SK-N-SH (cell line): ENCODE measurements at regions of chr1 and their contacts with region 1.

Region 1: DNA sequence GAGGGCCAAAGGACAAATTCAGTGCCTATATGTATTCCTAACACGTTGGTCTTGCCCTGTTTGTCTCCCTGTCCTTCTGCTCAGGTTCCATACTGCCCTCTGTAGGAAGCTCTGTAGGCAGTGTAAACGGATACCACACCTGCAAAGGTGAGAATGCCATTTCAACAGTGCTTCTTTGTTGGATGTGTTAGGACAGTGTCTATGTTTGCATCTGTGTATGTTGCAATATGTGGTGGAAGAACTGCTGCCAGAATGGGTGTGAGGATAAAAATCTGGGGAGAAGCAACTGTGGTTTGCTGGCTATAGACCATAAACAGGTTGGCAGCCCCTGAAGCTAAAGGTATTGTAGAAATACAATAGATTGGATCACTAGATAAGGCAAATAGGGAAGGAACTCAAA is 113.1 kb upstream of the BMP8A start:
- DNase-seq: no peak
- H3K4me3 ChIP-seq: no peak overlapping the region
- H3K27ac ChIP-seq: no peak overlapping the region
- H3K4me1 ChIP-seq: no peaks in the 10 kb centered on the region
- H3K27me3 ChIP-seq: no peaks in the 10 kb centered on the region
- CTCF ChIP-seq: peak; percentile 35; the same call in 1 of the 2 replicates
- EP300 ChIP-seq: no peak
- RAD21 ChIP-seq: no peak

Region 2: DNA sequence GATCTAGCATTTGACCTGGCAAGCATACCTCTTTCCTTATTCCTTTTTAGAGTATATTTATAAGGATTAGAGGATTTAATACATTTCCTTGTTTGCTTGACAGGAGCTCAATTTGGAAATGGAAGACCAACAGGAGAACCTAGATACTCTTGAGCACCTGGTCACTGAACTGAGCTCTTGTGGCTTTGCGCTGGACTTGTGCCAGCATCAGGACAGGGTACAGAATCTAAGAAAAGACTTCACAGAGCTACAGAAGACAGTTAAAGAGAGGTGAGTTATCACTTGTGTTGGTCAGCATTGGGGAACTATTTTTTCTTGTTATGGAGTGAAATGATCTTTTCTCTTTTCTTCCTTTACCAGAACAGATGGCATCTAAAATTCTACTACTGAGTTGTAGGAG is 10.3 kb before region 1 on chr1:
- CTCF ChIA-PET with region 1: interaction called, 10 read pairs
- POLR2A ChIA-PET with region 1: no interaction called
- DNase-seq: no peak
- H3K4me3 ChIP-seq: no peak overlapping the region
- H3K27ac ChIP-seq: no peak overlapping the region
- H3K4me1 ChIP-seq: no peaks in the 10 kb centered on the region
- H3K27me3 ChIP-seq: no peaks in the 10 kb centered on the region
- CTCF ChIP-seq: no peak
- EP300 ChIP-seq: no peak
- RAD21 ChIP-seq: no peak